Esophagus squamous epithelium (tissue), 5 donors: ENCODE measurements at regions of chr3 and their contacts with region 1.

Region 1: DNA sequence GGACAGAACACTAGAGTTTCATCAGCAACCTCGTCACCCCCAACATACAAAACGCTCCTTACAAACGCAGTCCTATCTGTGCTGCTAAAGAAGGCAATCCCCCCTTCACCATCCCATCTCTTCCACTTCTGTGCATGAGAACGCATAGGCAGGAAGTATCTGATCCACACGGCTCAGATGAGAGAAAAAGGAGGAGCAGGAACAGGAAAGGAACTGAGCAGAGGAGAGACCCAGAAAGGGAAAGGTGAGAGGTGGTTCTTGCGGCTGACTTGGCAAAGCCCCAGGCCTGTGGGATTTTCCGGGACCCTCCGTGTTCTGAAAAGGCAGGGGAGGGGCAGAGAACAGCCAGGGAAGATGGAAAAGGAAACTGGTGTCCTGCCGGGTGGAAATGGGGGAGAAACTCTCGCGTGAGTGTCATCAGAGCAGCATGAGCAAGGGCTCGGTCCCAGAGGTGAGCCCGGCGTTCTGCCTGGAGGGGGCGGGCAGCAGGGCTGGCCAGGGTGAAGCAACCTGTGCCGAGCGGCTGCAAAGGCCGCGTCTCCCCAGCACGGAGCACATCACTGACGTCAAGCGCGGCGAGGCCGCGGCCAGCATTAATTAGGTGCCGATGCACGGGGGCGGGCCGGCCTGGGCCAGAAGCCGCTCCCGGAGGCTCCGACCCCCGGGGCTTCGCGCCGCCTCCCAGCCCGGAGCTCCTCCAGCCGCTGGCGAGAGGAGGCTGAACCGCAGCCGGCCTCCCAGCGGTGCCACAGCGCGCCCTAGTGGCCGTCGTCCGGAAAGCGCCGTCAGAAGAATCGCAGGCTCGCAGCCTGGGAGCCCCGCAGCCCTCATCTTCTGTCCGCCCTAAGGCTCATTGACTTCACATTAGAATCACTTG is 35.8 kb downstream of the CPN2 start:
- DNase-seq: no peak
- H3K4me3 ChIP-seq: peak overlapping the region; percentile 42 to 63 (median 48)
- H3K27ac ChIP-seq: peak overlapping the region; percentile 60 to 79 (median 69)
- H3K4me1 ChIP-seq: peaks cover 15 to 73% (median 36%) of the 10 kb centered on the region in 3 donors
- H3K27me3 ChIP-seq: peaks cover 0 to 34% (median 0%) of the 10 kb centered on the region in 4 donors
- CTCF ChIP-seq: peak; percentile 93 to 98 (median 96)
- POLR2A ChIP-seq: no peak

Region 2: GRCh38 chr3:193780810-193781472 is 534.4 kb before region 1 on chr3:
- intact Hi-C with region 1: loop called (anchors 5 kb)
- DNase-seq: no peak
- H3K4me3 ChIP-seq: no peak overlapping the region
- H3K27ac ChIP-seq: peak overlapping the region; percentile 65 to 85 (median 80)
- H3K4me1 ChIP-seq: peaks cover 11 to 36% (median 12%) of the 10 kb centered on the region in 3 donors
- H3K27me3 ChIP-seq: peaks cover 0 to 32% (median 3%) of the 10 kb centered on the region in 4 donors
- CTCF ChIP-seq: peak; percentile 44 to 89 (median 78)
- POLR2A ChIP-seq: no peak

Region 3: GRCh38 chr3:194134757-194135528 is 180.4 kb before region 1 on chr3:
- intact Hi-C with region 1: loop called (anchors 5 kb)
- DNase-seq: peak; percentile 59
- H3K4me3 ChIP-seq: peak overlapping the region; percentile 53 to 88 (median 70)
- H3K27ac ChIP-seq: peak overlapping the region; percentile 93 to 98 (median 96)
- H3K4me1 ChIP-seq: peaks cover 22 to 96% (median 46%) of the 10 kb centered on the region in 3 donors
- H3K27me3 ChIP-seq: peaks cover 0 to 4% (median 0%) of the 10 kb centered on the region in 4 donors
- CTCF ChIP-seq: peak in 1 of 6 experiments; percentile 16
- POLR2A ChIP-seq: peak in 3 of 4 donors; percentile 45 to 66 (median 47)

Region 4: DNA sequence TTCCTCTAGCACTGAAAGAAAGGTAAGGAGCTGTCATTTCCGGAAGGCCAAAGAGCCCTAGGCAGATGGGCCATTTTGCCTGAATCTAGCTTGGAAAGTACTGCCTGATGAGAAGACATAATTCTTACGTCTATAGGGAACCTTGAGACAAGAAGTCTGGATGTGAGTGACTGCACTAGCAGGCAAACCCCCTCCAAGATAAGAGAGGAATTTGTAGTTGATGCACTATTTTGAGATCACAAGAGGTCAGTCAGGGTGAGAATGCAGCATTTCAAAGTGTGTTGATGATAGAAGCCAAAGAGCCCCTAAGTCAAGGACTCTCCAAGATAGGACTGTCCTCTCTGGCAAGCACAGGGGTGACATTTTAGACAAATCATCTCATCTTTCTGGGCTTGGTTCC is 80.2 kb before region 1 on chr3:
- intact Hi-C with region 1: no loop called
- DNase-seq: no peak
- H3K4me3 ChIP-seq: no peak overlapping the region
- H3K27ac ChIP-seq: no peak overlapping the region
- H3K4me1 ChIP-seq: peaks cover 0 to 10% (median 0%) of the 10 kb centered on the region in 3 donors
- H3K27me3 ChIP-seq: no peaks in the 10 kb centered on the region
- CTCF ChIP-seq: no peak
- POLR2A ChIP-seq: no peak

Region 5: GRCh38 chr3:194431553-194431952 is 116.2 kb after region 1 on chr3:
- intact Hi-C with region 1: no loop called
- DNase-seq: no peak
- H3K4me3 ChIP-seq: no peak overlapping the region
- H3K27ac ChIP-seq: no peak overlapping the region
- H3K4me1 ChIP-seq: no peaks in the 10 kb centered on the region
- H3K27me3 ChIP-seq: no peaks in the 10 kb centered on the region
- CTCF ChIP-seq: no peak
- POLR2A ChIP-seq: no peak